ENCODE measurements at regions of chr1 and their contacts with region 1.

Region 1: GRCh38 chr1:205977402-205978014 is 25.7 kb downstream of the RAB7B start:
- DNase-seq: peak; percentile 87

Region 2: GRCh38 chr1:205711104-205712020 is 266.1 kb before region 1 on chr1:
- CTCF ChIA-PET with region 1: interaction called, 10 read pairs
- POLR2A ChIA-PET with region 1: no interaction called
- DNase-seq: peak; percentile 75

Region 3: GRCh38 chr1:205907794-205908193 is 69.7 kb before region 1 on chr1:
- CTCF ChIA-PET with region 1: interaction called, 11 read pairs
- POLR2A ChIA-PET with region 1: no interaction called
- DNase-seq: peak; percentile 39

Region 4: DNA sequence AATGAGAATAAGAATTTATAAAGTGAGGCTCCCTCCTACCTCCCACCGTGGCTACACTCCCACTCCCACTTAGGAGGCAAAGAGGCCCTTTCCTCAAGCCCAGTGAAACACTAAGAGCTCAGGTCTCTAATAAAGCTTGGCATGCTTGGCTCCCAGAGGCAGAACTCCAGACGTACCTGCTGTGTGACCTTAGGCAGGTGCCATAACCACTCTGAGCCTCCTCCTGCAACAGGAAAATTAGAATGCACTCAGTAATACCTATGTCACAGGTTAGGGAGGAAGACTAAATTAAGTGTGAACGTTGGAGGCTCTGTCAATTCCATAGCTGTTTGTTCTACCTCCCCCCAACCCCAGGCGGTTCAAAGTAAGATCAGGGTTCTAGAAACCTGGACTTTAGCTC is 17.7 kb before region 1 on chr1:
- CTCF ChIA-PET with region 1: interaction called, 17 read pairs
- POLR2A ChIA-PET with region 1: interaction called, 3 read pairs
- DNase-seq: no peak

Region 5: GRCh38 chr1:206125346-206125745 is 147.8 kb after region 1 on chr1:
- CTCF ChIA-PET with region 1: no interaction called
- POLR2A ChIA-PET with region 1: no interaction called
- DNase-seq: no peak

Measured in HEK293T (cell line).